ENCODE measurements at regions of chr5 and their contacts with region 1.

Region 1: GRCh38 chr5:57499262-57500050 is 16.8 kb upstream of the ACTBL2 start:
- DNase-seq: peak; percentile 75
- H3K4me3 ChIP-seq: peak overlapping the region; percentile 40
- H3K27ac ChIP-seq: no peak overlapping the region
- H3K4me1 ChIP-seq: peaks cover 15% of the 10 kb centered on the region
- H3K27me3 ChIP-seq: no peaks in the 10 kb centered on the region

Region 2: DNA sequence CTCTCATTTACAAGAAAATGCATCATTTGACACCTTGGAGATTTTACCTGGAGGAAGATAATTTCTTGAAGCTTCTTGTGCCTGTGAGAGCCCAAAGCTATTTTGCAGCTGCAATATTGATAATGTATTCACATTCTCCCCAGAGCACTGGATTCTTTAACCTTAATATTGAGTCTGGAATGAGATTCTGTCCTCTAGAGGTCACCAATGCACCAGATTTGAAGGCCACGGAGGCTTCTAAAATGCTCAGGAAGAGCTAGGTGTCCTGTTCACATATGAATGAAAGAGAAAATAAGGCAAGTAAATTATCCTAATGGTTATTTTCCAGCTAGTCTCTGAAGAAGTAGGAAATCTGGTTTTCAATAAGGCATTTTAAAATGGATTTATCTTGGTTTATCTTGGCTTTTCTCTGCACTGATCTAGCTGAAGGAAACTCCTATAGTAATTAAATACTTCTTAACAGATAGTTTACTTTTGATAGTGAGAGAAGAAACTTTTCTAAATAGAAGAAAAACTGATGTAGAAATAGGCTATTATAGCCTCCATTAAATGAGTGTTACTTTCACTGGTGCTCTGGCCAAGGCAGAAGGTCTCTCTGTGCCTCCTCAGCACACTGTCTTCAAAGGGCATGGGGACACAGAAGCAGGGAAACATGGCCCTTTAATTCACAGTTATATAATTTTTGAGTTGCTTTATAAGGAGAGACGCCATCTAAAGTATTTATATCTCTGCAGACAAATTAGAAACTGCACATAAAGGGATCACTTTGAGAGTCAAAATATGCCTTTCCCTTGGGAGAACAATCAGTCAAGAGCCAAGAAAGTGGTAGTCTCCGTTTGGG is 280.1 kb after region 1 on chr5:
- in situ Hi-C with region 1: loop called (anchors 10 kb)
- DNase-seq: peak; percentile 82
- H3K4me3 ChIP-seq: no peak overlapping the region
- H3K27ac ChIP-seq: no peak overlapping the region
- H3K4me1 ChIP-seq: peaks cover 21% of the 10 kb centered on the region
- H3K27me3 ChIP-seq: no peaks in the 10 kb centered on the region